ENCODE measurements at regions of chr11 and their contacts with region 1.

Region 1: GRCh38 chr11:316891-317301 is 3.1 kb downstream of the IFITM1 start:
- DNase-seq: no peak
- H3K4me3 Mint-ChIP-seq: peak overlapping the region; percentile 92
- H3K27ac Mint-ChIP-seq: peak overlapping the region; percentile 95
- H3K4me1 Mint-ChIP-seq: peaks cover 29% of the 10 kb centered on the region
- H3K27me3 Mint-ChIP-seq: no peaks in the 10 kb centered on the region

Region 2: GRCh38 chr11:231486-231885 is 85.4 kb before region 1 on chr11:
- CTCF ChIA-PET with region 1: no interaction called
- POLR2A ChIA-PET with region 1: no interaction called
- DNase-seq: no peak
- H3K4me3 Mint-ChIP-seq: no peak overlapping the region
- H3K27ac Mint-ChIP-seq: no peak overlapping the region
- H3K4me1 Mint-ChIP-seq: peaks cover 11% of the 10 kb centered on the region
- H3K27me3 Mint-ChIP-seq: no peaks in the 10 kb centered on the region

Region 3: GRCh38 chr11:293271-293846 is 23.5 kb before region 1 on chr11:
- CTCF ChIA-PET with region 1: no interaction called
- POLR2A ChIA-PET with region 1: no interaction called
- DNase-seq: no peak
- H3K4me3 Mint-ChIP-seq: no peak overlapping the region
- H3K27ac Mint-ChIP-seq: no peak overlapping the region
- H3K4me1 Mint-ChIP-seq: peaks cover 33% of the 10 kb centered on the region
- H3K27me3 Mint-ChIP-seq: no peaks in the 10 kb centered on the region

Region 4: DNA sequence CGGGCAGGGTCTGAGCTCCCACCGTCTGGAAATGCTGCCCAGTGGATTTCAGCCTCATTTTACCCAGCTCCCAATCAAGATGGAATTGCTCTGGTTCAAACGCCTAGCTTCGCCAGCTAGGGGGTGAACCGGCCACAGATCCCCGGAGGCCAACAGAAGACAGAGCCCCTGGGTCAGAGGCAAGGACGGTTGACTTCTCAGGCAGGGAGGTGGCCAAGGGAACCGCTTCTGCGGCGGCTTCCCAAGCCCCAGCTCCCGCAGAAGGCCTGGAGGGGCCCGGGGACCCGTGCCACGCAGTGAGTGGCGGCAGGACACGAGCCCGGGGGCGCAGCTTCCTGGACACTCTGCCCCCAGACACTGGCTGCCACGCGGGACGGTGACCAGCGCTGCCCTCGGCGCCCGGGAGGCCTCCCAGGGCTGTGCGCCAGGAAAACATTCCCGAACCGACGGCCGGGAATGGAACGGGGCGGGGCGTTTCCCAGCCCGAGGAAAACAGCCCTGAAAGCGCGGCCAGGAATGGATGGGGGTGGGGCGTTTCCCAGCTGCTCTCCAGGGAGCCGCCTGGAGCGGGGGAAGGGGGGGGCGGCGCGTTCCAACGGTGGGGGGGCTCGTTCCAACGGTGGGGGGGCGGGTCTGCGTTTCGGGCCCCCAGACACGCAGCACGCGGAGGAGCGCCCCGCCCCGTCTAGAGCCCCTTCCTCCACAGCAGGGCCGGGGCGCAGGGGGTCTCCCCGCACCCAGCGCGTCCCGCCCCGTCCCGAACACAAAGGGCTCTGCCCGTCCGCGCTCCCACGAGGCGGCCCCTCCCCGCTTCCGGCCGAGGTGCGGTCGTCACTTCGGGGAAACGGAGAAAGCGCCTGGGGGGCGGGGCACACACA is 38.9 kb after region 1 on chr11:
- CTCF ChIA-PET with region 1: interaction called, 9 read pairs
- POLR2A ChIA-PET with region 1: interaction called, 18 read pairs
- DNase-seq: peak; percentile 93
- H3K4me3 Mint-ChIP-seq: peak overlapping the region; percentile 85
- H3K27ac Mint-ChIP-seq: peak overlapping the region; percentile 93
- H3K4me1 Mint-ChIP-seq: peaks cover 44% of the 10 kb centered on the region
- H3K27me3 Mint-ChIP-seq: peaks cover 3% of the 10 kb centered on the region

Region 5: GRCh38 chr11:441418-442274 is 124.8 kb after region 1 on chr11 and contains the start of gene ANO9:
- CTCF ChIA-PET with region 1: no interaction called
- POLR2A ChIA-PET with region 1: no interaction called
- DNase-seq: peak; percentile 76
- H3K4me3 Mint-ChIP-seq: peak within 1 kb of the TSS; percentile 73
- H3K27ac Mint-ChIP-seq: peak within 1 kb of the TSS; percentile 80
- H3K4me1 Mint-ChIP-seq: peaks cover 36% of the 10 kb centered on the region
- H3K27me3 Mint-ChIP-seq: peaks cover 8% of the 10 kb centered on the region
- total RNA-seq, gene ANO9: 88.2 to 94.2 TPM

Region 6: DNA sequence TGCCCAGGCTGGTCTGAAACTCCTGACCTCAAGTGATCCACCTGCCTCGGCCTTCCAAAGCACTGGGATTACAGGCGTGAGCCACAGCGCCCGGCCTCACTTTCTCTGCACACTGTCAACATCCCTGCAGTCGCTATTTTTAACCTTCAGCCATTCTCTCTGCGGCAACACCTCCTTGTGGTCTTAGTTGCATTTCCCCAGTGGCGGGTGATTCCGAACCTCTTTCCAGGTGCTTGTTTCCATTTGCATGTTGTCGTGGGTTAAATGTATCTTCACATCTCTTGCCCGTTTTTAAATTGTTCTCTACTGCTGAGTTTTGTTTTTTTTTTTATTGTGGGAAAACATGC is 312.3 kb after region 1 on chr11:
- CTCF ChIA-PET with region 1: no interaction called
- POLR2A ChIA-PET with region 1: no interaction called
- DNase-seq: no peak
- H3K4me3 Mint-ChIP-seq: peak overlapping the region; percentile 18
- H3K27ac Mint-ChIP-seq: peak overlapping the region; percentile 21
- H3K4me1 Mint-ChIP-seq: peaks cover 21% of the 10 kb centered on the region
- H3K27me3 Mint-ChIP-seq: peaks cover 27% of the 10 kb centered on the region

Measured in activated CD4-positive, alpha-beta T cell treated with anti-CD3 and anti-CD28 coated beads, Interleukin-2, amount 10 ng/mL, durations not matched to agents 7 days and 5 days (primary cell).